A549 (cell line): ENCODE measurements at regions of chr7 and their contacts with region 1.

Region 1: GRCh38 chr7:47435889-47436312 is 146.0 kb downstream of the TNS3 start:
- DNase-seq: peak; percentile 62 to 79
- ATAC-seq: peak; percentile 84 to 94
- H3K4me3 ChIP-seq: no peak overlapping the region
- H3K27ac ChIP-seq: peak overlapping the region; percentile 61 to 74
- H3K4me1 ChIP-seq: peaks cover 45% of the 10 kb centered on the region
- CTCF ChIP-seq: peak; percentile 62
- EP300 ChIP-seq: no peak
- POLR2A ChIP-seq: no peak
- RAD21 ChIP-seq: peak; percentile 66 to 71

Region 2: GRCh38 chr7:47411281-47411869 is 24.5 kb before region 1 on chr7:
- CTCF ChIA-PET with region 1: no interaction called
- POLR2A ChIA-PET with region 1: no interaction called
- DNase-seq: no peak
- ATAC-seq: no peak
- H3K4me3 ChIP-seq: no peak overlapping the region
- H3K27ac ChIP-seq: no peak overlapping the region
- H3K4me1 ChIP-seq: peaks cover 43% of the 10 kb centered on the region
- CTCF ChIP-seq: no peak
- EP300 ChIP-seq: no peak
- POLR2A ChIP-seq: no peak
- RAD21 ChIP-seq: no peak

Region 3: GRCh38 chr7:47453093-47454049 is 17.5 kb after region 1 on chr7:
- CTCF ChIA-PET with region 1: interaction called, 15 read pairs
- POLR2A ChIA-PET with region 1: interaction called, 3 read pairs
- DNase-seq: peak in 1 of 2 experiments; percentile 40
- ATAC-seq: peak; percentile 23 to 37; a peak in 5 of 6 replicates
- H3K4me3 ChIP-seq: no peak overlapping the region
- H3K27ac ChIP-seq: peak overlapping the region; percentile 54 to 76
- H3K4me1 ChIP-seq: peaks cover 89% of the 10 kb centered on the region
- CTCF ChIP-seq: no peak
- EP300 ChIP-seq: no peak
- POLR2A ChIP-seq: no peak
- RAD21 ChIP-seq: no peak